H1 (cell line): ENCODE measurements at regions of chr12 and their contacts with region 1.

Region 1: DNA sequence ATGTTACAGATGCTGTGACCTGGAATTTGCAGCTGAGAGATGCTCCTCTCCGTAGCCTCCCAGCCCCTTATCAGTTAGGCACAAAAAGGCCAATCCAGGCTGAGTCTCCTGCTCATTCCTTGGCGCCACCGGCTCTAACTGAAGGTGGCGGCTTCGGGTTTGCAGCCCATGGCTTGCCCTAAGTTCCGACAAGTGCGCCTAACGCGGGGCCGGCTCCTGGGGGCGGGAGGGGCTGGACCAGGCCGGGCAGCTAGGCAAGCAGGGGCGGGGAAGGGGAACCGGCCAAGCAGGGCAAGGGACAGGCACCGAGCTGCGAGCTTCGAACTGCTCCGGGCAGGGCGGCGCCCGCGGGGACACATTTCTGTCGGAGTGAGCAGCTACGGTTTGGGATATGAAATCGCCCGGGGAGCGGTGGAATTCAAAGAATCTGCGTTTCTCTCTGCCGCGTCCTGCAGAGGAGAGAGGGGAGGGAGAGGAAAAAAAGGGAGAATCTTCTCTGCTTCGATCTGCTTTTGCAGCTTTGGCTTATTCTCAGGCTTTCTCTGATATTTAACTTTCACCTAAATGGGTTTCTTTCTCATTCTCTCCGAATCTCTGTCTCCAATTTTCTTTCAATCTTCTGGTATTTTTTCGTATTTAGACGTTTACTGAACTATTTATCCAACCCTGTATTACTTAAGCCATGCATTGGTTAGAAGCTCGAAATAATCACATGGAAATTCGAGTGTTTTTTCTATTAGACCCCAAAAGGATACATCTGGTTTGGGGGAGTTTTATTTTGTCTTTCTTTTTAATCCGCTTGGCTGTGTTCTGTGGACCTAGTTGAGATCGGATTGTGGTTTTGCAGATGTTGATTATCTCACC is 1.6 kb upstream of the HOXC12 start:
- DNase-seq: peak in 1 of 2 experiments; percentile 81
- H3K4me3 ChIP-seq: peak overlapping the region in 1 of 4 experiments; percentile 6; a peak in 1 of 8 replicates
- H3K27ac ChIP-seq: no peak overlapping the region
- H3K4me1 ChIP-seq: peaks cover 0 to 19% (median 4%) of the 10 kb centered on the region in 4 experiments; a peak in 6 of 7 replicates
- H3K27me3 ChIP-seq: peaks cover 100% of the 10 kb centered on the region in 4 experiments
- CTCF ChIP-seq: no peak
- EP300 ChIP-seq: no peak
- POLR2A ChIP-seq: no peak
- RAD21 ChIP-seq: no peak

Region 2: GRCh38 chr12:53938326-53939140 is 14.6 kb before region 1 on chr12 and contains the start of gene HOXC13:
- CTCF ChIA-PET with region 1: interaction called, 9 read pairs
- POLR2A ChIA-PET with region 1: interaction called, 12 read pairs
- DNase-seq: peak; percentile 92 to 97
- H3K4me3 ChIP-seq: peak within 1 kb of the TSS in 1 of 4 experiments; percentile 48; a peak in 3 of 8 replicates
- H3K27ac ChIP-seq: no peak within 1 kb of the TSS
- H3K4me1 ChIP-seq: peaks cover 0 to 6% (median 5%) of the 10 kb centered on the region in 4 experiments; a peak in 4 of 7 replicates
- H3K27me3 ChIP-seq: peaks cover 90 to 100% (median 97%) of the 10 kb centered on the region in 4 experiments
- CTCF ChIP-seq: no peak
- EP300 ChIP-seq: no peak; a peak in 1 of 3 replicates
- POLR2A ChIP-seq: no peak
- RAD21 ChIP-seq: no peak
- total RNA-seq, gene HOXC13: 0.13 TPM in 1 of 2 replicates, not detected in the other